ENCODE measurements at regions of chr1 and their contacts with region 1.

Region 1: GRCh38 chr1:65419681-65420589 is 533 bp upstream of the LEPR start:
- DNase-seq: peak; percentile 97
- H3K4me3 Mint-ChIP-seq: no peak overlapping the region
- H3K27ac Mint-ChIP-seq: no peak overlapping the region
- H3K4me1 Mint-ChIP-seq: peaks cover 28% of the 10 kb centered on the region
- H3K27me3 Mint-ChIP-seq: no peaks in the 10 kb centered on the region
- CTCF ChIP-seq: no peak

Region 2: DNA sequence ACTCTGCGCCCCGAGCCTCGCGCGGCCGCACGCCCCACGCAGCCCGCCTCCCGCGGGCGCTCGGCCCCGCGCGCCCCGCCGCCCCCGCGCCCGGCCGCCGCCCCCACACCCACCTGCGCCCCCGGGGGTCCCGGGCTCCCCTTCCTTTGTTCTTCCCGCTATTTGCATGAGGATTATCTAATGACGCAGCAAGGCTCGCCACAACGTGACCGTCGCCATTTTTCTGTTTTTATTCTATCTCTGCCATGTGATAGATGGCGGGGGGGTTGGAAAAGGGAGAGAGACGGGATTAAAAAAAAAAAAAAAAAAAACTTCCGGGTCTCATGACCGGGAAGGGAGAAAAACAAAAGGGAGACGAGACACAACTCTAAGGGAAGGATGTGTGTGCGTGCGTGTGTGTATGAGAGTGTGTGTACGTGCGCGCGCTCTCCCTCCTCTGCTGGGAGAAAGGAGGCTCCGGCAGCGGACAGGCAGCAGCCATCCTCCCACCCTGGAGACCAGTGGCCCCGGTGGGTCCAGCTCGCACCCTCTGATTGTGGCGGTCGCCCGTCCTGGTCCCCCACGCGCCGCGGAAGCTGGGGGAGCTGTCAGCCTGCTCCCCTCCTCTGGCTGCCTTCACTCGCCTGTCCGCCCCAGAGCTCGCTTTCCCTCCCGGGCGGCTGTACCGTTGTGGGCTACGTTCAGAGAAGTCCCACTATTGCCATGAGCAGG is 352.3 kb before region 1 on chr1:
- CTCF ChIA-PET with region 1: interaction called, 3 read pairs
- POLR2A ChIA-PET with region 1: interaction called, 8 read pairs
- intact Hi-C with region 1: loop called (anchors 5 kb)
- DNase-seq: peak; percentile 70
- H3K4me3 Mint-ChIP-seq: peak overlapping the region; percentile 77
- H3K27ac Mint-ChIP-seq: peak overlapping the region; percentile 92
- H3K4me1 Mint-ChIP-seq: peaks cover 13% of the 10 kb centered on the region
- H3K27me3 Mint-ChIP-seq: no peaks in the 10 kb centered on the region
- CTCF ChIP-seq: no peak

Region 3: GRCh38 chr1:65254319-65255034 is 165.5 kb before region 1 on chr1:
- CTCF ChIA-PET with region 1: interaction called, 7 read pairs
- POLR2A ChIA-PET with region 1: interaction called, 70 read pairs
- intact Hi-C with region 1: loop called (anchors 2 kb)
- DNase-seq: peak; percentile 74
- H3K4me3 Mint-ChIP-seq: peak overlapping the region; percentile 74
- H3K27ac Mint-ChIP-seq: peak overlapping the region; percentile 7
- H3K4me1 Mint-ChIP-seq: peaks cover 18% of the 10 kb centered on the region
- H3K27me3 Mint-ChIP-seq: no peaks in the 10 kb centered on the region
- CTCF ChIP-seq: no peak

Region 4: GRCh38 chr1:65309304-65310077 is 110.4 kb before region 1 on chr1 and contains the start of gene DNAJC6:
- CTCF ChIA-PET with region 1: no interaction called
- POLR2A ChIA-PET with region 1: interaction called, 6 read pairs
- intact Hi-C with region 1: loop called (anchors 2 kb)
- DNase-seq: peak; percentile 69
- H3K4me3 Mint-ChIP-seq: peak within 1 kb of the TSS; percentile 82
- H3K27ac Mint-ChIP-seq: no peak within 1 kb of the TSS
- H3K4me1 Mint-ChIP-seq: no peaks in the 10 kb centered on the region
- H3K27me3 Mint-ChIP-seq: no peaks in the 10 kb centered on the region
- CTCF ChIP-seq: no peak
- total RNA-seq, gene DNAJC6: 7.9 and 8.4 TPM in 2 replicates

Region 5: GRCh38 chr1:65395887-65396612 is 23.9 kb before region 1 on chr1:
- CTCF ChIA-PET with region 1: interaction called, 5 read pairs
- POLR2A ChIA-PET with region 1: interaction called, 16 read pairs
- intact Hi-C with region 1: no loop called
- DNase-seq: peak; percentile 77
- H3K4me3 Mint-ChIP-seq: no peak overlapping the region
- H3K27ac Mint-ChIP-seq: no peak overlapping the region
- H3K4me1 Mint-ChIP-seq: peaks cover 21% of the 10 kb centered on the region
- H3K27me3 Mint-ChIP-seq: no peaks in the 10 kb centered on the region
- CTCF ChIP-seq: no peak

Region 6: DNA sequence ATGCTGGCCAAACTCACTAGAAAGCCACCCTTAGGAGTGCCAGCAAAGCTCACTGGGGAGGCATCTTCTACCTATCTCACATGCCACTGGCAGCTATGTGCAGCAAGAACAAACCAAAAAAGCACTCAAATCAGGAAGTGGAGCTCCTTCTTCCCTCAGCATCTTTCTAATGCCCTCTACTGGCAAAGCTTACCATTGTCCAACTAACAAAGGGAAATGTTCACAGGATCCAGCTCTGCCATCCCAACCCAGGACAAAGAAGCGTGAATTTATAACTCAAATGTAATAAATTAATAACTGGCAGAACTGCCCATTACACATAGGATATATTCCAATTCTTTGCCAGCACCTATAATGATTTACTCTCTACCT is 39.4 kb after region 1 on chr1:
- CTCF ChIA-PET with region 1: interaction called, 7 read pairs
- POLR2A ChIA-PET with region 1: interaction called, 12 read pairs
- intact Hi-C with region 1: no loop called
- DNase-seq: peak; percentile 57
- H3K4me3 Mint-ChIP-seq: no peak overlapping the region
- H3K27ac Mint-ChIP-seq: peak overlapping the region; percentile 31
- H3K4me1 Mint-ChIP-seq: peaks cover 16% of the 10 kb centered on the region
- H3K27me3 Mint-ChIP-seq: no peaks in the 10 kb centered on the region
- CTCF ChIP-seq: peak; percentile 54